Psoas muscle (tissue), 8 donors: ENCODE measurements at regions of chr11 and their contacts with region 1.

Region 1: DNA sequence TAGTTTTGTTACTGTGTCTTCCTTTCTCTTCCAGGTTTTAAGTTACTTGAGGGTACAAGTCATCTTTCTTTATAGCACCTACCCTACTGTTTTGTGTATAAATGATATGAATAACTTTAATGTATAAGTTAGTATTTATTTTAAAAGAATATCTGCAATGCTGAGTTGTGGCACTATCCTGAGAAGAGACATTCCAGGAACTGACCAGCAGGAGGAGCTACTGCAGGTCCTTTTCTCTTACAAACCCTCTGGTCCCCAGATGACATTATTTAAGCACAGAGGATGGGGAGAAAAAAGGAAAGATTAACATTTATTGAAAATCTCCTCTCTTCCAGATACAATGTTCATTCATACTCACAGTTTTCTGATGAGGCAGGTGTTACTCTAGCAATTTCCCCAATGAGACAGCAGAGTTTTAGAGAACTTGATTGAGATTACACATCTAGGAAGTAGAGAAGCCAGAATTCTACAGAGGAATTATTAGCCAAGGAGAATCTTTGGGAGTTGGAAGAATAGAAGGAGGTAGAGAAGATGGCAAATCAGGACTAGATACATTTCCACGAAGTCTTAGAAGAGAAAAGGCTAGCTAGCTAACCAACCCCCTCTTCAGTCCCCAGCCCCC is 541.2 kb upstream of the API5 start:
- DNase-seq: no peak
- ATAC-seq: no peak
- H3K4me3 ChIP-seq: no peak overlapping the region
- H3K27ac ChIP-seq: no peak overlapping the region
- H3K4me1 ChIP-seq: no peaks in the 10 kb centered on the region
- H3K27me3 ChIP-seq: no peaks in the 10 kb centered on the region
- CTCF ChIP-seq: peak; percentile 37

Region 2: GRCh38 chr11:42923651-42924050 is 153.1 kb after region 1 on chr11:
- intact Hi-C with region 1: loop called in 1 of 2 experiments (anchors 10 kb)
- DNase-seq: no peak
- ATAC-seq: no peak
- H3K4me3 ChIP-seq: no peak overlapping the region
- H3K27ac ChIP-seq: no peak overlapping the region
- H3K4me1 ChIP-seq: no peaks in the 10 kb centered on the region
- H3K27me3 ChIP-seq: no peaks in the 10 kb centered on the region
- CTCF ChIP-seq: no peak

Region 3: DNA sequence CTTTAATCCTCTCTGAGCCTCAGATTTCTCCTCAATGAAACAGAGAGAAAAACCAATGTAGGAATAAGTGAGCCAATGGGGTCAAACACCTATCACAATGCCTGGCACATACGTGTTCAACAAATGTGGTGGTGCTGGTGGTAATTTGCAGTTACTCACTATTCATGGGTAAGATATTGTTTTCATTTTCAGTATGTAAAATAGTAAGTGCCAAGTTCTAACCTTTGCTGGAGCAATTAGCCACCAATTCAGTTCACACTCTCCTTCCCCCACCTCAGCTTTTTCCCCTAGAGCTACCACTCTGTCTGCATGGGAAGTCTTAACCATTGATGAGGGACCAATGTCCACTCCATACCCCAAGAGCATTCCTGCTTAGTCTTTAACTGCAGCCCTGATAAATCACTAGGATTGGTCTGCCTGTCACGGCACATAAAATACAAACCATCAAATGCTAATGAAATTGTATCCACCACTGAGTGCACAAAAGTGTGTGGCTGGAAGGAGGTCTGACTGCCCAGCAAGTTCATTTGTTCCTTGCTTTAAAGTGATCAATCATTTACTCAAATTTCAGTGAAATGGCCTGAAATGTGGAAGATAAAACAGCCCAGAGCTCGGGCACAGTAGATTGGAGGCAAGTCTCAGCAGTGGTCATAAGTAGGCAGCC is 353.8 kb after region 1 on chr11:
- intact Hi-C with region 1: loop called in 1 of 2 experiments (anchors 10 kb)
- DNase-seq: no peak
- ATAC-seq: no peak
- H3K4me3 ChIP-seq: no peak overlapping the region
- H3K27ac ChIP-seq: no peak overlapping the region
- H3K4me1 ChIP-seq: no peaks in the 10 kb centered on the region
- H3K27me3 ChIP-seq: no peaks in the 10 kb centered on the region
- CTCF ChIP-seq: no peak